MCF 10A (cell line): ENCODE measurements at regions of chr17 and their contacts with region 1.

Region 1: GRCh38 chr17:43694077-43694870 is 32.6 kb upstream of the MEOX1 start:
- DNase-seq: peak; percentile 86
- H3K4me3 Mint-ChIP-seq: no peak overlapping the region
- H3K27ac Mint-ChIP-seq: no peak overlapping the region
- H3K4me1 Mint-ChIP-seq: no peaks in the 10 kb centered on the region
- H3K27me3 Mint-ChIP-seq: no peaks in the 10 kb centered on the region
- CTCF ChIP-seq: peak; percentile 84

Region 2: DNA sequence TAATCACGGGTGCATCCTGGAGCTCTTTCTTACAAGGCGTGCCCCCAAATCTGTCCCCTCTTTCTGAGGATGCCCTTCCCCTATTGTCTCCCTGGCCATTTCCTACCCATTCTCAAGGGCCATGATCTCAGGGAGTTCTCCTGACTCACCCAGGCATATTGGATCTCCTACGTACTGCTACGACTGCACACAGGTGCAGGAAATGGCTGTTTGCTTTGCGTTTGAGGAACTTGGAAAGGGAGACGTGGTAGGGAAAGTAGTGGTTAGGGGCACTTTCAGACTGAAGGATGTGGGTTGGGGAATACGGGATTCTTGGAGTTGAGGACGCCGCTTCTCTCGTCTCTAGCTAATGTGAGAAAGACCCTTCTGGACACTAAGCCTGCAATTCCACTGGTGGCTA is 13.8 kb before region 1 on chr17:
- CTCF ChIA-PET with region 1: interaction called, 10 read pairs
- POLR2A ChIA-PET with region 1: no interaction called
- intact Hi-C with region 1: no loop called
- DNase-seq: no peak
- H3K4me3 Mint-ChIP-seq: no peak overlapping the region
- H3K27ac Mint-ChIP-seq: no peak overlapping the region
- H3K4me1 Mint-ChIP-seq: peaks cover 4% of the 10 kb centered on the region
- H3K27me3 Mint-ChIP-seq: no peaks in the 10 kb centered on the region
- CTCF ChIP-seq: no peak

Region 3: DNA sequence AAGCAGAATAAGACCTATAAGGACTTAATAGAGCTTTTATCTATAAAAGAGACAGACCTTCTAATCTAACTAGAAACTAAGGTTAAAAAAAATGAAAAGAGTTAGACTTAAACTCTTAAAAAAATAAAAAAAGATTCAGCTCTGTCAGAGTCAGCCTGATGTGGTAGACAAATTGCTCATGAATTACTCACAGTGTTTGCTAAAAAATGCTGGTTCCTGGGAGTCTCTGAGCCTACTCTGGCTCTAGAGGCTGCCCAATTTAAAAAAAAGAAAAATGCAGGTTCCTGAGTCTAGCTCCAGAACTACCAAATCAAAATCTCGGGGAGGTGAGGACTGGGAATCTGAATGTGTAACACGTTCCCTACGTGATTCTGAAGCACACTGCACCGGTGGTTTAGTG is 46.3 kb after region 1 on chr17:
- CTCF ChIA-PET with region 1: interaction called, 13 read pairs
- POLR2A ChIA-PET with region 1: no interaction called
- intact Hi-C with region 1: no loop called
- DNase-seq: peak; percentile 21
- H3K4me3 Mint-ChIP-seq: no peak overlapping the region
- H3K27ac Mint-ChIP-seq: no peak overlapping the region
- H3K4me1 Mint-ChIP-seq: peaks cover 8% of the 10 kb centered on the region
- H3K27me3 Mint-ChIP-seq: no peaks in the 10 kb centered on the region
- CTCF ChIP-seq: no peak

Region 4: GRCh38 chr17:43760254-43760852 is 66.1 kb after region 1 on chr17:
- CTCF ChIA-PET with region 1: interaction called, 467 read pairs
- POLR2A ChIA-PET with region 1: interaction called, 20 read pairs
- intact Hi-C with region 1: loop called (anchors 1 kb)
- DNase-seq: peak; percentile 95
- H3K4me3 Mint-ChIP-seq: no peak overlapping the region
- H3K27ac Mint-ChIP-seq: no peak overlapping the region
- H3K4me1 Mint-ChIP-seq: peaks cover 12% of the 10 kb centered on the region
- H3K27me3 Mint-ChIP-seq: no peaks in the 10 kb centered on the region
- CTCF ChIP-seq: peak; percentile 98